ENCODE measurements at regions of chr11 and their contacts with region 1.

Region 1: DNA sequence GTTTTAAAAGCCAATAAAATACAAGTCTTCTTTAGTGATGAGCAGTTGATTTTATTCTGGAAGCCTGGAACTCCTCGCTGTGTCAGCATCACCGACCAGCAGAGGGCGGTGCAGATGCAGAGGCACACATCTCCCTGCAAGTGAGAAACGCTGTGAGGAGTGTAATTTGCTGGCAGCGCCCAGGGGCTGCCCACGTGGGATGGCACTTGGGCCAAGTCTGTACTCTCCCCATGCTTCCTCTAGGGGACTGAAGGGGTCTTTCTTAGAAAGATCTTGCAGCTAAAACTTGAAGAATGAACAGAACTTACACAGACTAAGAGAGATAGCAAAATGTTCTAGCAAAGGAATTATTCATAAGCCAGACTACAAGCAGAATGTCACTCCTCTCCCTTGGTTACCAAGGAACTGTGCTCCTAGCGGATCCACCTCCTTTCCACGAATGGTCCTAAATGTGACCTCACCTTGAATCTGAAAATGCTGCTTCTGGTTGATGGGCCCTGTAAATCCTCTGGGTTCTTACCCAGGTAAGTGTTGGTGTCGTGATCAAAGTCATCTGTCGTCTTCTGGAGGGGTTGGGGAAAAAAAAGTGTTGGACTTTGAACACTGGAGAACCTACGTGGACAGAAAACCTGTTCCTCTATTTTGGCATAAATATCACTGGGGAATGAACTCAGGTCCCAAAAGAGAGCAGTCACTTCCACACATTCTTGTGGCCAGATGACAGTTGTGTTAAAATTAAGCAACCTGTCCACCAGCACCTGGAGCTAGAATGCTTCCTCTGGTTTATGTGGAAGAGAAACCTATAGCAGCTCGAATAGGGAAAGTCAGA is 31.8 kb downstream of the CNTF start:
- DNase-seq: peak; percentile 75
- H3K4me3 ChIP-seq: no peak overlapping the region
- H3K27ac ChIP-seq: no peak overlapping the region
- H3K4me1 ChIP-seq: no peaks in the 10 kb centered on the region
- H3K27me3 ChIP-seq: peaks cover 5 to 24% of the 10 kb centered on the region in 2 experiments
- CTCF ChIP-seq: peak; percentile 91 to 94
- POLR2A ChIP-seq: no peak

Region 2: GRCh38 chr11:58490827-58491226 is 163.5 kb before region 1 on chr11:
- CTCF ChIA-PET with region 1: no interaction called
- POLR2A ChIA-PET with region 1: no interaction called
- dilution Hi-C with region 1: no loop called
- intact Hi-C with region 1: no loop called
- DNase-seq: no peak
- H3K4me3 ChIP-seq: no peak overlapping the region
- H3K27ac ChIP-seq: no peak overlapping the region
- H3K4me1 ChIP-seq: no peaks in the 10 kb centered on the region
- H3K27me3 ChIP-seq: no peaks in the 10 kb centered on the region
- CTCF ChIP-seq: no peak
- POLR2A ChIP-seq: no peak

Region 3: GRCh38 chr11:58629857-58630256 is 24.4 kb before region 1 on chr11:
- CTCF ChIA-PET with region 1: interaction called, 10 read pairs
- POLR2A ChIA-PET with region 1: no interaction called
- dilution Hi-C with region 1: no loop called
- intact Hi-C with region 1: no loop called
- DNase-seq: peak; percentile 46
- H3K4me3 ChIP-seq: no peak overlapping the region
- H3K27ac ChIP-seq: no peak overlapping the region
- H3K4me1 ChIP-seq: peaks cover 13% of the 10 kb centered on the region
- H3K27me3 ChIP-seq: no peaks in the 10 kb centered on the region
- CTCF ChIP-seq: peak; percentile 41 to 65
- POLR2A ChIP-seq: no peak

Region 4: DNA sequence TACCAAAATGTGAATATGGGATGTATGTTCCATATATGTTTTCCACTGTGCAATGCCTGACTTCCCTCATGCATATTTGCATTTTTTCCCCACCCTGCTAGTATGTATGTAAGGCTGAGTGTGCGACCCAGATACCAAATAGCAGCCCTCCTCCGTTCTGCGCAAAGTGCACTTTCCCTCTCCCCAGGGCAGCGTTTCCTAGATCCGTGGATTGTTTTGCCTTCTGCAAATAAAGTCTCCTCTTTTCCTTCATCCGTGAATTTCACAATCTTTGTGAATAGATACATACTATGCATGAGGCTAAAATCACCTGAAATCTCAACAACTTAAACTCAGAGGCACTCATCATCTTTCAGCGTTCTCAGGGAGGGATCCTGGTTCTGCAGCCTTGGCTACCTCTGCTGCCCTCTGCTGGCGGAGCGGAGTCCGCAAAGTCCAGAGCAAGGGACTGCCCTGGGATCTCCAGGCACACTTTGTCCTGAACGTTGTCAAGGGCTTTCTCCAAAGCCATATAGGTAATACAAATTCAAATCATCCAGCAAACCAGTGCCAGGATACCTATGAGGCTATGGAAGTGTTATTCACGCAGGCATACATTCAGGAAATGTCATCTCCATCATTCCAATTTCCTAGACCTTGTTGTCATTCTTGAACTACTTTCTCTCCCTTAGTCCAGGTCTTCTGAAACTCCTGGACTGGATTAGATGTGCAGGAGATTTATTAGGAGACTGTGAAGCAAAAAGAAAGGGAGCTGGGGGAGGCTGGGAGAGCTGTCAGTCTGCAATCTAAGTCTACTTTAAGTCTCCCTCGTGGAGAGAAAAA is 21.3 kb after region 1 on chr11:
- CTCF ChIA-PET with region 1: interaction called, 8 read pairs
- POLR2A ChIA-PET with region 1: no interaction called
- dilution Hi-C with region 1: no loop called
- intact Hi-C with region 1: loop called (anchors 1 kb)
- DNase-seq: peak; percentile 49
- H3K4me3 ChIP-seq: no peak overlapping the region
- H3K27ac ChIP-seq: no peak overlapping the region
- H3K4me1 ChIP-seq: no peaks in the 10 kb centered on the region
- H3K27me3 ChIP-seq: no peaks in the 10 kb centered on the region
- CTCF ChIP-seq: peak; percentile 94 to 95
- POLR2A ChIP-seq: no peak

Region 5: GRCh38 chr11:58711832-58712231 is 57.5 kb after region 1 on chr11:
- CTCF ChIA-PET with region 1: no interaction called
- POLR2A ChIA-PET with region 1: no interaction called
- dilution Hi-C with region 1: no loop called
- intact Hi-C with region 1: no loop called
- DNase-seq: no peak
- H3K4me3 ChIP-seq: no peak overlapping the region
- H3K27ac ChIP-seq: no peak overlapping the region
- H3K4me1 ChIP-seq: no peaks in the 10 kb centered on the region
- H3K27me3 ChIP-seq: no peaks in the 10 kb centered on the region
- CTCF ChIP-seq: no peak
- POLR2A ChIP-seq: no peak

Region 6: GRCh38 chr11:58788355-58789023 is 134.2 kb after region 1 on chr11:
- CTCF ChIA-PET with region 1: interaction called, 9 read pairs
- POLR2A ChIA-PET with region 1: no interaction called
- dilution Hi-C with region 1: no loop called
- intact Hi-C with region 1: loop called (anchors 1 kb)
- DNase-seq: peak; percentile 42
- H3K4me3 ChIP-seq: no peak overlapping the region
- H3K27ac ChIP-seq: no peak overlapping the region
- H3K4me1 ChIP-seq: no peaks in the 10 kb centered on the region
- H3K27me3 ChIP-seq: no peaks in the 10 kb centered on the region
- CTCF ChIP-seq: peak; percentile 72 to 80
- POLR2A ChIP-seq: no peak

Region 7: GRCh38 chr11:58900479-58901420 is 246.5 kb after region 1 on chr11:
- CTCF ChIA-PET with region 1: no interaction called
- POLR2A ChIA-PET with region 1: no interaction called
- dilution Hi-C with region 1: no loop called
- intact Hi-C with region 1: loop called (anchors 2 kb)
- DNase-seq: peak; percentile 41
- H3K4me3 ChIP-seq: no peak overlapping the region
- H3K27ac ChIP-seq: no peak overlapping the region
- H3K4me1 ChIP-seq: no peaks in the 10 kb centered on the region
- H3K27me3 ChIP-seq: peaks cover 8 to 10% of the 10 kb centered on the region in 2 experiments
- CTCF ChIP-seq: peak; percentile 31 to 43
- POLR2A ChIP-seq: no peak

Region 8: DNA sequence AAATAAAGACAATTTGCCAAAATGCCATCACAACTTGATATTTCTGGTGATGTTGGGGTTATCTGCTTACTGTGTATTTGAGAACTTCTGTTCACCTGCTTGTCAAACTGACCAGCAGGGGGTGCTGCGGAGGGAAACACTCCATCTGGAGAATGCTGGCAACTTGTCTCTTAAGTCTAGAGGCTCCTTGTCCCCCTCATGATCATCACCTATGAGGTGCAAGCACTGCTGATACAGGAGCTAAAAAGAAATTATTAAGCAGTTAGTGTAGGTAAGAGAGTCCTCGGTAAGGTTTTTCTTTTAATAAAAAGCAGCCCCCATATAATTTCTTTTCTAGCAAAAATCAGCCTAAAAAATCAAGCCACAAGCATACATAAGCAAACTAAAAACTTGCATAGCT is 399.1 kb after region 1 on chr11:
- CTCF ChIA-PET with region 1: no interaction called
- POLR2A ChIA-PET with region 1: no interaction called
- dilution Hi-C with region 1: no loop called
- intact Hi-C with region 1: loop called (anchors 1 kb)
- DNase-seq: peak; percentile 59
- H3K4me3 ChIP-seq: no peak overlapping the region
- H3K27ac ChIP-seq: no peak overlapping the region
- H3K4me1 ChIP-seq: no peaks in the 10 kb centered on the region
- H3K27me3 ChIP-seq: peaks cover 2 to 4% of the 10 kb centered on the region in 2 experiments
- CTCF ChIP-seq: peak; percentile 69 to 74
- POLR2A ChIP-seq: no peak

Measured in endothelial cell of umbilical vein (primary cell).